ENCODE measurements at regions of chr12 and their contacts with region 1.

Region 1: GRCh38 chr12:6607751-6608591 is 792 bp upstream of the CHD4 start:
- DNase-seq: no peak
- ATAC-seq: peak; percentile 31
- H3K4me3 Mint-ChIP-seq: no peak overlapping the region
- H3K27ac Mint-ChIP-seq: no peak overlapping the region
- H3K4me1 Mint-ChIP-seq: peaks cover 64% of the 10 kb centered on the region
- H3K27me3 Mint-ChIP-seq: no peaks in the 10 kb centered on the region
- CTCF ChIP-seq: no peak

Region 2: GRCh38 chr12:6493497-6494257 is 114.3 kb before region 1 on chr12 and contains the start of gene NCAPD2:
- CTCF ChIA-PET with region 1: no interaction called
- POLR2A ChIA-PET with region 1: interaction called, 3 read pairs
- intact Hi-C with region 1: loop called (anchors 1 kb)
- DNase-seq: peak; percentile 85
- ATAC-seq: peak; percentile 85
- H3K4me3 Mint-ChIP-seq: peak within 1 kb of the TSS; percentile 97
- H3K27ac Mint-ChIP-seq: peak within 1 kb of the TSS; percentile 96
- H3K4me1 Mint-ChIP-seq: peaks cover 28% of the 10 kb centered on the region
- H3K27me3 Mint-ChIP-seq: no peaks in the 10 kb centered on the region
- CTCF ChIP-seq: no peak
- total RNA-seq, gene NCAPD2: 38.4 and 40.9 TPM in 2 replicates

Region 3: GRCh38 chr12:6570264-6570887 is 37.6 kb before region 1 on chr12:
- CTCF ChIA-PET with region 1: interaction called, 4 read pairs
- POLR2A ChIA-PET with region 1: interaction called, 14 read pairs
- intact Hi-C with region 1: loop called (anchors 1 kb)
- DNase-seq: peak; percentile 37
- ATAC-seq: no peak
- H3K4me3 Mint-ChIP-seq: no peak overlapping the region
- H3K27ac Mint-ChIP-seq: peak overlapping the region; percentile 41
- H3K4me1 Mint-ChIP-seq: peaks cover 28% of the 10 kb centered on the region
- H3K27me3 Mint-ChIP-seq: no peaks in the 10 kb centered on the region
- CTCF ChIP-seq: no peak

Region 4: GRCh38 chr12:6647083-6647604 is 39.2 kb after region 1 on chr12 and contains the start of gene ACRBP:
- CTCF ChIA-PET with region 1: no interaction called
- POLR2A ChIA-PET with region 1: interaction called, 14 read pairs
- intact Hi-C with region 1: no loop called
- DNase-seq: peak; percentile 71
- ATAC-seq: peak; percentile 83
- H3K4me3 Mint-ChIP-seq: peak within 1 kb of the TSS; percentile 84
- H3K27ac Mint-ChIP-seq: peak within 1 kb of the TSS; percentile 74
- H3K4me1 Mint-ChIP-seq: peaks cover 39% of the 10 kb centered on the region
- H3K27me3 Mint-ChIP-seq: no peaks in the 10 kb centered on the region
- CTCF ChIP-seq: no peak
- total RNA-seq, gene ACRBP: 5.4 and 7.7 TPM in 2 replicates

Region 5: DNA sequence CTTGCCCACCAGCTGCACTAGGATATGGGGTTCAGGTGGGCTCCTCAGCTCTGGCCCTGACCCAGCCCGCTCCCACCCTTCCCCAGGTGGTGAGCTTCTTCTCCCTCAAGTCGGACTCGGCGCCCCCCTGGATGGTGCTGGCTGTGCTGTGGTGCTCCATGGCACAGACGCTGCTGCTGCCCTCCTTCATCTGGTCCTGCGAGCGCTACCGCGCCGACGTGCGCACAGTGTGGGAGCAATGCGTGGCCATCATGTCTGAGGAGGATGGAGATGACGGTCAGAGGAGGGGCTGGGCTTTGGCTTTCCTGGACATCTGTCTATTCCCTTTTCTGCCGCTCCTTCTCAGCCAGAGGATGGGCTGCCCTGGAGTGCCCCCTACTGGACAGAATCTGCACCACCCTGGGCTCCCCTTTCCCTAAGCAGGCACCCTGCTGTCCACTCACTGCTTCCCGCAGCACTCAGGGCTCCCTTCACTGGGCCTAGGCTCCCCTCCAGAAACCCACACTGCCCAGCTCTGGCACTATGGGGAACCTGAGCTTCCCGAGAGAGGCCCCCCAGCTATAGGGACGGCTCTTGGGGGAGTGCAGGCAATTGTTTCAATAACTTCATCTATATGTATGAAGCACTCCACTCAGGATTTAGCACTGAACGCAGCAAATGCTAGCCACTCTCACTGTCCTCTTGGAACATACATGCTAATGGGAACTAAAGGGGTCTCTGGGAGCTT is 217.6 kb after region 1 on chr12:
- CTCF ChIA-PET with region 1: no interaction called
- POLR2A ChIA-PET with region 1: no interaction called
- intact Hi-C with region 1: loop called (anchors 1 kb)
- DNase-seq: peak; percentile 69
- ATAC-seq: peak; percentile 62
- H3K4me3 Mint-ChIP-seq: no peak overlapping the region
- H3K27ac Mint-ChIP-seq: no peak overlapping the region
- H3K4me1 Mint-ChIP-seq: peaks cover 32% of the 10 kb centered on the region
- H3K27me3 Mint-ChIP-seq: peaks cover 73% of the 10 kb centered on the region
- CTCF ChIP-seq: peak; percentile 47

Region 6: DNA sequence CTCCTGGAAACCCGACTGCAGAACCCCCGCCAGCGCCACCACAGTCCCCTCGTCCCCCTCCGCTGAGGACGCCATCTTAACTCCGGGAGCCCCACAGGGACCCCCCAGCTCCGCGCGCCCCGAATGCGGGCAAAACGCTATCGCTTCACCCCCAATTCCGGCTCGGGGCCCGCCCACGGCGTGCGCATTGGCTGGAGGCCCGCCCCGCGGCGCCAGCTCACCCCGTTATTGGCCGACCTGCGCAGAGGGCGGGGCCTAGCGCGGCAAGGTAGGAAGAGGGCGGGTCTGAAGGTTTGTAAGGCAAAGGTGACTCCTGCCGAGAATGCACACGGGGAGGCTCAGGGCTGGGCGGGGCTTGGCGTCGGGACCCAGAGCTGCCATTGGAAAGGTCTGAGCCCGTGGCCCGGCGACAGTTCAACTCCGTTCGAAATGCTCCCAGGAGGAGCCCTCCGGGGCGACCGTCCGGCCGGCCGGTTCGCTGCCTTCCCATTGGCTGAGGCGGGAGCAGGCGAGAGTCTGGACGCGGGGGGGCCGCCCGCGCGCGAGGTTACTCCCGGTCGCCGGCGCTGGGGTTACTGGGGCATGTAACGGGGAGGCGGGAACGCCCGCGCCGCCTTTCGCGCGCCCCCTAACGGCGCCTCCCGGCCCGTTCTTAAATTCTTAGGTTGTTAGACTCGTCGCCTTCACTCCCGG is 410.5 kb after region 1 on chr12 and contains the start of gene LPCAT3:
- CTCF ChIA-PET with region 1: no interaction called
- POLR2A ChIA-PET with region 1: interaction called, 3 read pairs
- intact Hi-C with region 1: loop called (anchors 1 kb)
- DNase-seq: peak; percentile 94
- ATAC-seq: peak; percentile 96
- H3K4me3 Mint-ChIP-seq: peak within 1 kb of the TSS; percentile 87
- H3K27ac Mint-ChIP-seq: peak within 1 kb of the TSS; percentile 77
- H3K4me1 Mint-ChIP-seq: peaks cover 20% of the 10 kb centered on the region
- H3K27me3 Mint-ChIP-seq: no peaks in the 10 kb centered on the region
- CTCF ChIP-seq: no peak
- total RNA-seq, gene LPCAT3: 19.3 and 21.3 TPM in 2 replicates